GM13977 (cell line): ENCODE measurements at regions of chr11 and their contacts with region 1.

Region 1: DNA sequence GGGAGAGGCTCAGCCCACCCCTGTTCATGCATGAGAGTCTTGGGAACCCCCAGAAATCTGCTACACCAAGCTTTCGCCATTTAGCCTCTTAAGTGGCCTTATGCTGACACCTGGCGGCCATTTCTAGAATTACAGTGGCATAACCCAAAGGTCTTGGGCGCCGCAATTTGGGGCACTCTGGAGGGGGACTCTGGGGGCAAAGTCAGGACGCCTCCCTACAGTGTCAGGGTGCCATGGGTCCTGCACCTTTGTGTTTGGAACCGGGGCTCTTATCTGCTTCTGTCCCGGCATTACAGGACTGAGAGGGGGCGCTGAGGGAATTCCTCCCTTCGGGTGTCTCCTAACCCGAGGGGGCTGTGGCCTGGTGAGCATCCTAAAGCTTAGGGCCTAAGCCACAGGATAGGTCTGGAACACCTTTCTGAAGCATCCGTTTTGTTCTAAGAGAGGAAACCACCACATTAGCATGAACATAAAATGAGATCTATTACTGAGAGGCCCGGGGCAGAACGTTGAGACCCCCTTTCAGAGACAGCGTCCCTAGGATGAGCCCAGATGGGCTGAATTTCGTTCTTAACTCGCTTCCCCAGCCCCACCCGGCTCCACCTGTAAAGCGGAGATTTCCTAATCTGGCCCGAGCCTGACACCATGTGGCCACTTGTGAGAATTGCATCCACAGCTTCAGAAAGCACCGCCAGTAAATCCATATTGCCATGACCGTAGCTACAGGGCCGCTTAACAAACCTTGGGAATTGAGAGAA is 9.3 kb downstream of the INS start:
- DNase-seq: peak; percentile 90
- CTCF ChIP-seq: peak; percentile 90

Region 2: GRCh38 chr11:1694064-1694845 is 457.4 kb before region 1 on chr11:
- in situ Hi-C with region 1: loop called (anchors 25 kb)
- DNase-seq: peak; percentile 91
- CTCF ChIP-seq: peak; percentile 98

Region 3: DNA sequence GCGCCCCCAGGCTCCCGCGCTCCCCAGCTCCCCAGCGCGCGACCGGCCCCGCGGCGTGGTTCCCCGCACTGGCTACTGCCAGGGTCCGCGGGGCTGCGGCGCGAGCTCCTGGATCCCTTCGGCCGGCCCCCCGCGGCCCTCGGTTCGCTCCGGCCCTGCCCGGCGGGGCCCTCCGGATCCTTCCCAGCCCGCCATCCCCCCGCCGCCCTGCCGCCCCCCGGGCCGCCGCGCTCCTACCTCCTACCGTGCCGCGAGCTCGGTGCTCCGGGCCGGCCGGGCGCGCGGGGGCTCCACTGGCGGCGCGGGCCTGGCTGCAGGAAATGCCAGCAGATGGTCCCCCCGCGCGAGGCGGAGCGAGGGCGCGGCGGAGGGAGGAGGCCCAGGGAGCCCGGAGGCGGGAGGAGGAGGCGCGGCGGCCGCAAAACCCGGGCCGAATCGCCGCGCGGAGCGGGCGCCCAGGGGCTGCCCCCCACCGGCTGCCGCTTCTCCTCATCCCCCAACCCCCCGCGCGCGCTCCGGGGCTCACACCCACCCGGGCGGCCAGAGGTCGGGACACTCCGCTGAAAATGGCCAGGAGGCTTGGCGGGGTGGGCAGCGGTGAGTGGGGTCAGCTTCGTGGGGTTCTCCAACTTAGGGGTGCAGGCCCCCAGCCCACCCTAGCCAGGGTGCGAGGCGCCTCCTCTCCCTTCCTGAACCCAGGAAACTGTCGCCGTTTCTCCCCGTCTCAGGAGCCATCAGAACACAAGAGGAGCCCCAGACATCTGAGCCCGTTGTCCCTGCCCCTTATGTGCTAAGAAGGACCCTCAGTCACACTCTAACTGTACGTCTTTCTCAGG is 1013.5 kb after region 1 on chr11 and contains the start of gene OSBPL5:
- in situ Hi-C with region 1: no loop called
- DNase-seq: no peak
- CTCF ChIP-seq: no peak